Activated CD8-positive, alpha-beta T cell treated with anti-CD3 and anti-CD28 coated beads, Interleukin-2, amount 10 ng/mL, durations not matched to agents 7 days and 5 days (primary cell): ENCODE measurements at regions of chr7 and their contacts with region 1.

Region 1: DNA sequence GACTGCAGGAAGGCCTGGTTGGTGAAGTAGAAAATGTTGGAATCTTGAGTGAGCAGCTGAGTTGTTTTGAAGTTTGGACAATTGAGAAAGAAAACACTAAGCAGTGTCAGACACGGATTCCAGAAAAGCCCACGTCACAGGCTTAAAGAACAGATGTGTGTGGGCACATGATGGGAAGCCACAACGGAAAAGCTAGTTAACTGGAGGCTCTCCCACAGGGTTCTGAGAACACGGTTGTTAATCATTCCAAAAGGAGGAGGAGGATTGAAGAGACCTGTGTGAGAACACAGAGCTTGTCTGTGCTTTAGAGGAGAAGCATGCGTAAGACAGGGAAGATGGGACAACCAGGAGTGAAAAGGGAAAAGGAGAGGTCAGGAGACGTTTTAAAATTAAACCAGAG is 42.6 kb downstream of the SHH start:
- DNase-seq: no peak
- ATAC-seq: no peak
- H3K4me3 Mint-ChIP-seq: no peak overlapping the region
- H3K27ac Mint-ChIP-seq: no peak overlapping the region
- H3K4me1 Mint-ChIP-seq: peaks cover 29% of the 10 kb centered on the region
- H3K27me3 Mint-ChIP-seq: no peaks in the 10 kb centered on the region

Region 2: GRCh38 chr7:155738652-155739537 is 30.8 kb before region 1 on chr7:
- CTCF ChIA-PET with region 1: interaction called, 25 read pairs
- POLR2A ChIA-PET with region 1: no interaction called
- DNase-seq: peak; percentile 81
- ATAC-seq: peak; percentile 85
- H3K4me3 Mint-ChIP-seq: peak overlapping the region; percentile 48
- H3K27ac Mint-ChIP-seq: peak overlapping the region; percentile 74
- H3K4me1 Mint-ChIP-seq: peaks cover 59% of the 10 kb centered on the region
- H3K27me3 Mint-ChIP-seq: no peaks in the 10 kb centered on the region

Region 3: DNA sequence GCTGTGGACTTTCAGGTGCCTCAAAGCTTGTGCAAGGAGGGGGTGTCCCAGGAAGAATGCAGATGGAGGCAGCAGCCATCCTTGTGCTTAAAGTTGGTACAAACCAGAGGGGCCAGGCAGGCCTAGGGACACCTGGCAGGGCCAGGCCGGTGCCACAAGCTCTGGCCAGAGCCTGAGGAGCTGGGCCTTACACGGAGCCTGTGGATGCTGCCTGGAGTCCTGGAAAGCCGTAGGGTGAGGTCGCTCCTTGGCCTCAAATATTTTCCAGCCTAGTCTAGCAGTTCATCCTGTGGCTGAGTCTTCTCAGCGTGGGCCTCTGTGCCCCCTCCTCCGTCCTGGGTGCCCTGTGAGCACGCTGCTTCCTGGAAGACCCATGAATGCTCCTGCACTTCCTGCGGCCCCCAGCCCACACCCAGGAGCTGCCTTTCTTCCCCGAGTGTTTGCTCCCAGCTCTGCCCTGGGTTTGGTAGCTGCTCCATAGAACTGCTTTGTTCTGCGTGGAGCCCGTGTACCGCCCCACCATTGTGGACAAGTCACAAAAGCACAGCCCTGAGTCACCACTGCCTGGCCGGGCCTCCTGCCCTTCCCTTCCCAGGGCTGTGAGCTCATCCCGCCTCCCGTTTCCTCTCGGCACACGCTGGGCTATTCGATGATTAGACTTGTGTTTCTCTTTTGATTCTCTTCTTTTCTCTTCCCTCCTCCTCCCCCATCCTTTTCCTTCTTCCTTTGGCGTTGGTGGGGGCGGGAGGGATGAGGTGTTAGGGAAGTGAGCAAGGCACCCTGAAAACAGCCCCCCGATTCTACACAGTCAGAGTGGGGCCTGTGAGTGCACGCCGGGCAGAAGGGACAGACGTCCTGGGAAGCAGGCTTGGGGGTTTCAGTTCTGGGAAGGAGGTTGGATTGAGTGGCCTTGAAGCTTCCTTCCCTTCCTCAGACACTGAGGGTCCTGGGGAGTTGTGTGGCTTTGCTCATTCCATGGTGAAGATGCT is 115.8 kb after region 1 on chr7:
- CTCF ChIA-PET with region 1: no interaction called
- POLR2A ChIA-PET with region 1: no interaction called
- DNase-seq: no peak
- ATAC-seq: no peak
- H3K4me3 Mint-ChIP-seq: no peak overlapping the region
- H3K27ac Mint-ChIP-seq: no peak overlapping the region
- H3K4me1 Mint-ChIP-seq: peaks cover 3% of the 10 kb centered on the region
- H3K27me3 Mint-ChIP-seq: no peaks in the 10 kb centered on the region

Region 4: DNA sequence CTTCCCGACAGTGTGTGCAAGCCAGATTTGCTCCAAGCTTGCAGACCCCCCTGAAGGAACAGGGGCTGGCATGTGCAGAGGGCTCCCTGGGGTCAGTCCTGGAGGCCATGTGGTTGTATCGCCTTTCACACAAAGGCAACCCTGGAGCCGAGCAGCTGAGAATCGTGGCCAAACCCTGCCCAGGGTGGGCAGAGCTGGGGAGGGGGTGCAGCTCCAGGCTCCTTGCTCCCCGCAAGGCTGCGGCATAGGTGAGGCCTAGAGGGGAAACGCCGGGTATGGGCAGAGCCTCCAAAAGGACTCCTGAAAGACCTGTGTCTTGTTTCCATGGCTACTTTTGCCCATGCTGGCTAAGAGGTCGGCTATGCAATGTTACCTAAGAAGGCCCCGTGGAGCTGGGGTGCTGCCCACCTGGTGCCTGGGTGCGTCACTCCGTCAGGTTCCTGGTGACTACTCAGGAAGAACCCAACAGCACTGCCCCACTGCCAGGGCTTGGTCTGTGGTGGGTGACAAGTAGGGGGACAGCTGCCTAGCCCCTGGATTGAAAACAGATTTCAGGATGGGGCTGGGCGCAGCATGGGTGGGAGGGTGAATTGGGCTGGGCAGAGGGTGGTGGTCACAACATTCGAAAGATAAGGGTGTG is 213.6 kb after region 1 on chr7:
- CTCF ChIA-PET with region 1: no interaction called
- POLR2A ChIA-PET with region 1: no interaction called
- DNase-seq: no peak
- ATAC-seq: no peak
- H3K4me3 Mint-ChIP-seq: no peak overlapping the region
- H3K27ac Mint-ChIP-seq: no peak overlapping the region
- H3K4me1 Mint-ChIP-seq: no peaks in the 10 kb centered on the region
- H3K27me3 Mint-ChIP-seq: peaks cover 6% of the 10 kb centered on the region